Calu3 (cell line): ENCODE measurements at regions of chr7 and their contacts with region 1.

Region 1: DNA sequence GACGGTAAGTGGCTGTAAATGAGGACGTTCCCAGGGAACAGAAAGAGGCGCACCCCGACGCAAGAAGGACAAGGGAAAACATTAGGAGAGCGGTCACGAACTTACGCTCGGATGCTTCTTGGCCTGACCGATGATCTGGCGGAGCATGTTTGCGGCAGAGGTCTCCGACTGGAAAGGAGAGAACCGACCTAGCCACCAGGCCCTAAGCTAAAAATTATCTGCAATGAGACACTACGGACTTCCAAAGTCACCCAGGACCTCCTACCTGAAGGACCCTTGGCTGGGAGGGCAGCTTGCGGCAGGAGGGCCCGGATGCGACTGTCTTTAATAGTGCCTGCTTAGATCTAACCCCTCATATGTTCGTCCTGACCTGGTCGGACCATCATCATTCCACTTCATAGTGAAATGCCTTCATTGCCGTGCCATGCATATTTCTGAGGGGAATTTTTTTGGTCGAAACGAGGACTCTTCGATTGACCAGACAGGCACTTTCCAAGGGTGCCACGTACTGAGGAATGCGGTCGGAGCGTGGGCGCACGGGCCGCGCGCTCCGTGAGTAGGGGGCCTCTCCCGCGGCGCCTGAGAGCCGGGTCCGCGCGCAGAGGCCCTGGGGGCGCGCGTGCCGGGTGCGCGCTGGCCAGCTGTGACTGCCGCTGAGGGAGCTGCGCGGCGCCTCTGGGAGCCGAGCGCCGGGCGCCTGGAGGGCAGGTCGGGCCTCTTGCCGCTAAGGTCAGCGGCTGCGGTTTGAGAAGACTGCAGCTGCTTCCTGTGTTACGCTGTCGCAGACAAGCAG is 33.6 kb upstream of the PHF14 start:
- DNase-seq: peak; percentile 94
- H3K4me3 Mint-ChIP-seq: no peak overlapping the region
- H3K27ac Mint-ChIP-seq: no peak overlapping the region
- H3K4me1 Mint-ChIP-seq: no peaks in the 10 kb centered on the region
- H3K27me3 Mint-ChIP-seq: no peaks in the 10 kb centered on the region
- CTCF ChIP-seq: no peak

Region 2: GRCh38 chr7:10973061-10973944 is 33.2 kb after region 1 on chr7 and contains the start of gene PHF14:
- CTCF ChIA-PET with region 1: interaction called, 3 read pairs
- intact Hi-C with region 1: loop called (anchors 1 kb)
- DNase-seq: peak; percentile 97
- H3K4me3 Mint-ChIP-seq: peak within 1 kb of the TSS; percentile 76
- H3K27ac Mint-ChIP-seq: peak within 1 kb of the TSS; percentile 75
- H3K4me1 Mint-ChIP-seq: peaks cover 9% of the 10 kb centered on the region
- H3K27me3 Mint-ChIP-seq: no peaks in the 10 kb centered on the region
- CTCF ChIP-seq: no peak
- total RNA-seq, gene PHF14: 37.7 and 40.2 TPM in 2 replicates